Posterior cingulate gyrus (tissue), 11 donors: ENCODE measurements at regions of chrX and their contacts with region 1.

Region 1: DNA sequence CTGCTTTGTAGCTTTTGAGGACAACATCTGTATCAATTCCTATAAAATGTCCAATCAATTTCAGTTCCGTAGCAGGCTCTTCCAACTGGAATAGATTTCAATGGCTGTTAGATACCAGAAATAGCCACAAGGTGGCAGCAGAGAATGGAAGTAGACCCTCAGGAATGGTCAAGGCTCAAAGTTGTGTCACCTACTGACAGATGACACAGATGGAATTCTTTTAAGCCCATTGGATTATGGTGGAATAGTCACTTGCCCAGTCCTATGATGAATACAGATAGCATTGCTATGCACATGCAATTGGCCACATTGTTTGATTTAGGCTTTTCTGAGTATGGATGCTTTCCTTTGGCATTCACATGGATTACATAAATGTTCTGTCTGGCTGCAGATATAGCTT is 130.4 kb upstream of the RADX start:
- DNase-seq: peak in 5 of 10 donors; percentile 11 to 59 (median 29)

Region 2: GRCh38 chrX:106415276-106415895 is 66.0 kb before region 1 on chrX:
- intact Hi-C with region 1: no loop called
- DNase-seq: no peak

Region 3: GRCh38 chrX:106619797-106620196 is 138.5 kb after region 1 on chrX:
- intact Hi-C with region 1: loop called (anchors 5 kb)
- DNase-seq: no peak

Region 4: DNA sequence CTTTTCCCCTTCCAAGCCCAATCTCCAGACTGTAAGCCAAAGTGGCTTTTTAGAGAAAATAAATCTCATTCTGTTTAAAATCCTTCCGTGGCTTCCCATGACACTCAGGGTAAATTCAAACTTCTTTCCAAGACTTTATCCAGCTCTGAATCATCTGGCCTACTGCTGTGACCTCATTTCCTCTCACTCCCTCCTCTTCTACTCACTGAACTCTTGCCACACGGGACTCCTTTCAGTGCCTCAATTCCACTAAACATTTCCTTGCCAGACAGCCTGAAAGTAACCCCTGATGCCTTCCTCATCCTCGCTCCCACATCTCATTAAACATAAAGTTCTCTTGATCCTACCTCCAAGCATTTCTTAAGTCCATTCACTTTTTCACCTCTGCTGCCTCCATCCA is 217.4 kb after region 1 on chrX:
- intact Hi-C with region 1: no loop called
- DNase-seq: no peak

Region 5: GRCh38 chrX:106791495-106791894 is 310.2 kb after region 1 on chrX:
- intact Hi-C with region 1: loop called (anchors 5 kb)
- DNase-seq: no peak

Region 6: GRCh38 chrX:106952988-106953387 is 471.6 kb after region 1 on chrX:
- intact Hi-C with region 1: loop called (anchors 10 kb)
- DNase-seq: no peak

Region 7: DNA sequence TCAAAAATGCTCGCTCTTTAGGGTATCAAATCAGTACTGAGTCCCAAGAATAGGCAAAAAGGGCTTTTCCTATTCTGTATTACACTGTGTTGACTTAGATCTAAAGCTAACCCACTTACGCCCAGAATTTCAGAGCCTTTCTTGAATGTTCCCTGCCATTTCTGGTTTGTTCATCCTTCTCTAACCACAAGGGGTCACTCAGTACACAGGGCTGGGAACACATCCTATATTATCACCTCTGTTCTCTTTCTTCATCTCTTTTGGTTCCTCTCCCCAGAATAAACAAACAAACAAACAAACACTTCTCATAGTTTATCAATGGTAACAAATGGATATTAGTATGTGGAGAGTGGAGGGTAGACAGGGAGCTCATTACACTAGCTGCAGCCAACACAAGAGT is 544.2 kb after region 1 on chrX:
- intact Hi-C with region 1: no loop called
- DNase-seq: no peak